Psoas muscle (tissue), 8 donors: ENCODE measurements at regions of chr4 and their contacts with region 1.

Region 1: GRCh38 chr4:102566426-102566825 is 65.3 kb downstream of the NFKB1 start:
- DNase-seq: no peak
- ATAC-seq: no peak
- H3K4me3 ChIP-seq: no peak overlapping the region
- H3K27ac ChIP-seq: no peak overlapping the region
- H3K4me1 ChIP-seq: peaks cover 6% of the 10 kb centered on the region
- H3K27me3 ChIP-seq: no peaks in the 10 kb centered on the region
- CTCF ChIP-seq: no peak

Region 2: DNA sequence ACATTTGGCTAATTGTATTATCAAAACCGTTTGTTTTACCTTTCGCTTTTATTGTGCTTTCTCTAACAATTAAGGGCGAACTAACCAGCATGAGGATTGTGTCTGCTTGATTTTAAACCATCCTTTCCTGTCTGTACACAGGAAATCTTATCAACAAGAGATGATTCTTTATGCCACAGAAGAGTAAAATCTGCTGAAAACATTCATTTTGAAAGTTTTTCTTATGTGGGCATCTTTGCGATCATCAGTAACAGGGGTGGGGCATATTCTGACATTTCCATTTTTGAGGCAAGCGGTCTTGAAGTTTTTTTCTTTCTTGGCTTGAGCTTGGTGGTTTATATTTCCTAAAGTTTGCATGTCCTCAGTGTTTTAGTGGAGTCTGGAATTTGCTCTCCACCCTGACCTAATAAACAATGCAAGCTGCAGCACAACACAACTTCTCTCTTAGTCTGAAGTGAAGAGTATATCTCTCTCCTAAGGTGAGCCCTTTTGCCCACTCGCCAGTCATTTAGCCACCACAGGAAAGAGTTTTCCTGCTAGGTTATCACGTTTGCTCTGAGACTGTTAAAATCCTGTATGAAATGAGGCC is 38.6 kb before region 1 on chr4:
- intact Hi-C with region 1: loop called in 1 of 2 experiments (anchors 2 kb)
- DNase-seq: no peak
- ATAC-seq: no peak
- H3K4me3 ChIP-seq: no peak overlapping the region
- H3K27ac ChIP-seq: no peak overlapping the region
- H3K4me1 ChIP-seq: peaks cover 14% of the 10 kb centered on the region
- H3K27me3 ChIP-seq: no peaks in the 10 kb centered on the region
- CTCF ChIP-seq: no peak

Region 3: GRCh38 chr4:103067841-103068547 is 501.6 kb after region 1 on chr4:
- intact Hi-C with region 1: no loop called
- DNase-seq: no peak
- ATAC-seq: no peak
- H3K4me3 ChIP-seq: no peak overlapping the region
- H3K27ac ChIP-seq: no peak overlapping the region
- H3K4me1 ChIP-seq: no peaks in the 10 kb centered on the region
- H3K27me3 ChIP-seq: no peaks in the 10 kb centered on the region
- CTCF ChIP-seq: no peak